ENCODE measurements at regions of chr1 and their contacts with region 1.

Region 1: GRCh38 chr1:244835276-244836134 is at the start of gene COX20:
- DNase-seq: peak; percentile 81 to 95 (median 91)
- H3K4me3 ChIP-seq: peak within 1 kb of the TSS; percentile 96
- H3K4me3 Mint-ChIP-seq: peak within 1 kb of the TSS; percentile 88 to 100 (median 99)
- H3K27ac ChIP-seq: peak within 1 kb of the TSS; percentile 98
- H3K27ac Mint-ChIP-seq: peak within 1 kb of the TSS; percentile 96 to 100 (median 99)
- H3K4me1 ChIP-seq: peaks cover 44% of the 10 kb centered on the region
- H3K4me1 Mint-ChIP-seq: peaks cover 45 to 56% (median 52%) of the 10 kb centered on the region in 3 donors
- H3K27me3 ChIP-seq: no peaks in the 10 kb centered on the region
- H3K27me3 Mint-ChIP-seq: peaks cover 0 to 1% of the 10 kb centered on the region in 2 donors
- total RNA-seq, gene COX20: 35.7 to 36.2 TPM

Region 2: GRCh38 chr1:244652699-244653466 is 182.6 kb before region 1 on chr1 and contains the start of gene DESI2:
- CTCF ChIA-PET with region 1: interaction called, 3 read pairs
- POLR2A ChIA-PET with region 1: interaction called, 27 read pairs
- DNase-seq: peak; percentile 96 to 99 (median 98)
- H3K4me3 ChIP-seq: peak within 1 kb of the TSS; percentile 72
- H3K4me3 Mint-ChIP-seq: peak within 1 kb of the TSS in 6 of 7 donors; percentile 82 to 89 (median 86)
- H3K27ac ChIP-seq: peak within 1 kb of the TSS; percentile 82
- H3K27ac Mint-ChIP-seq: peak within 1 kb of the TSS; percentile 64 to 93 (median 92)
- H3K4me1 ChIP-seq: peaks cover 31% of the 10 kb centered on the region
- H3K4me1 Mint-ChIP-seq: peaks cover 20 to 23% (median 21%) of the 10 kb centered on the region in 3 donors
- H3K27me3 ChIP-seq: no peaks in the 10 kb centered on the region
- H3K27me3 Mint-ChIP-seq: peaks cover 0 to under 1% of the 10 kb centered on the region in 2 donors
- total RNA-seq, gene DESI2: 32.9 to 33.7 TPM

Region 3: GRCh38 chr1:244801246-244801645 is 34.3 kb before region 1 on chr1:
- CTCF ChIA-PET with region 1: interaction called, 16 read pairs
- POLR2A ChIA-PET with region 1: interaction called, 10 read pairs
- DNase-seq: peak; percentile 25 to 69 (median 42)
- H3K4me3 ChIP-seq: no peak overlapping the region
- H3K4me3 Mint-ChIP-seq: peak overlapping the region in 1 of 7 donors; percentile 54
- H3K27ac ChIP-seq: no peak overlapping the region
- H3K27ac Mint-ChIP-seq: peak overlapping the region in 2 of 8 donors; percentile 22 to 73
- H3K4me1 ChIP-seq: no peaks in the 10 kb centered on the region
- H3K4me1 Mint-ChIP-seq: peaks cover 4 to 5% (median 4%) of the 10 kb centered on the region in 3 donors
- H3K27me3 ChIP-seq: no peaks in the 10 kb centered on the region
- H3K27me3 Mint-ChIP-seq: peaks cover 5 to 22% of the 10 kb centered on the region in 2 donors

Region 4: GRCh38 chr1:244854865-244855578 is 19.5 kb after region 1 on chr1:
- CTCF ChIA-PET with region 1: interaction called, 7 read pairs
- POLR2A ChIA-PET with region 1: interaction called, 66 read pairs
- DNase-seq: no peak
- H3K4me3 ChIP-seq: no peak overlapping the region
- H3K4me3 Mint-ChIP-seq: peak overlapping the region; percentile 19 to 71 (median 51)
- H3K27ac ChIP-seq: no peak overlapping the region
- H3K27ac Mint-ChIP-seq: peak overlapping the region; percentile 61 to 98 (median 84)
- H3K4me1 ChIP-seq: peaks cover 67% of the 10 kb centered on the region
- H3K4me1 Mint-ChIP-seq: peaks cover 80 to 99% (median 95%) of the 10 kb centered on the region in 3 donors
- H3K27me3 ChIP-seq: no peaks in the 10 kb centered on the region
- H3K27me3 Mint-ChIP-seq: no peaks in the 10 kb centered on the region

Region 5: DNA sequence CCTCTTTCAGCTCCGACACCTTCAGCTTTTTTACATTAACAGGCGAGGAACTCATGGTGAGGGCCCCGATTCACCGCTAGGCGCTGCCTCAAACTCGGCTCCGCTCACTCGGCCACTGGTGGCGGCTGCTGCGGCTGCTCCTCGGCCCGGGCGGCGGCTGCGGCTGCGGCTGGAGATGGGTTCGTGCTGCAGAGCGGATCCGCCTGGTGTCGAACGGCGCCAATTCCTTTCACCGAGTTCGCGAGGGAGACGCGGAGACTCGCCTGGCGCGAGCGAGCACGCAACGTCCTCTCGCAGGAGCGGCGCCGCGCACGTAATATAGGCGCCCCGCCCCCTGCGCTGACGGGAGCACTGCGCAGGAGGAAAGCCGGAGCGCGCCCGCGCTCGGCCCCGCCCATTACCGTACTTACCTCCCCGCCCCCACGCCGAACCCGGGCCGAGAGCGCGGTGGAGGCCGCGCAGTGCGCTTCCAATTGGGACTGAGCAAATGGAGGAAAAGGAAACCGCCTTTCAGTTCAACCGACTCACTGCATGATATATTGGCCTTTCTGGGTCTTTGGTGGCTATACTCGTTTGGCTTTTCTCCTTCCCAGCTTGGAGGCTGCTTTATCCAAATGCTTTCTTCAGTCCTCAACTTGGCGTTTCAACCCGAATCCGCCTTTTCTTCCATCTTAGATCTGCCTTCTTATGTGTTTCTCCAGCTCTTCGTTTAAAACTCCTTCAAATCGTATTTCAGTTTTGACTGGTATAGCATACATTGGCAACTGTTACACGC is 28.9 kb after region 1 on chr1 and contains the start of gene HNRNPU:
- CTCF ChIA-PET with region 1: interaction called, 95 read pairs
- POLR2A ChIA-PET with region 1: interaction called, 322 read pairs
- DNase-seq: peak; percentile 93 to 99 (median 97)
- H3K4me3 ChIP-seq: peak within 1 kb of the TSS; percentile 87
- H3K4me3 Mint-ChIP-seq: peak within 1 kb of the TSS; percentile 90 to 98 (median 93)
- H3K27ac ChIP-seq: peak within 1 kb of the TSS; percentile 94
- H3K27ac Mint-ChIP-seq: peak within 1 kb of the TSS; percentile 91 to 100 (median 98)
- H3K4me1 ChIP-seq: peaks cover 45% of the 10 kb centered on the region
- H3K4me1 Mint-ChIP-seq: peaks cover 34 to 52% (median 48%) of the 10 kb centered on the region in 3 donors
- H3K27me3 ChIP-seq: no peaks in the 10 kb centered on the region
- H3K27me3 Mint-ChIP-seq: peaks cover 0 to 10% of the 10 kb centered on the region in 2 donors
- total RNA-seq, gene HNRNPU: 598 to 630 TPM

Region 6: GRCh38 chr1:244970661-244971551 is 135.4 kb after region 1 on chr1:
- CTCF ChIA-PET with region 1: interaction called, 19 read pairs
- POLR2A ChIA-PET with region 1: interaction called, 99 read pairs
- DNase-seq: peak; percentile 86 to 96 (median 95)
- H3K4me3 ChIP-seq: peak overlapping the region; percentile 69
- H3K4me3 Mint-ChIP-seq: peak overlapping the region; percentile 91 to 98 (median 93)
- H3K27ac ChIP-seq: peak overlapping the region; percentile 99
- H3K27ac Mint-ChIP-seq: peak overlapping the region; percentile 96 to 100 (median 98)
- H3K4me1 ChIP-seq: peaks cover 12% of the 10 kb centered on the region
- H3K4me1 Mint-ChIP-seq: peaks cover 16 to 29% (median 19%) of the 10 kb centered on the region in 3 donors
- H3K27me3 ChIP-seq: no peaks in the 10 kb centered on the region
- H3K27me3 Mint-ChIP-seq: no peaks in the 10 kb centered on the region